ENCODE measurements at regions of chr5 and their contacts with region 1.

Region 1: GRCh38 chr5:81751009-81751835 is at the start of gene SSBP2:
- DNase-seq: peak; percentile 99 to 100 (median 100)
- ATAC-seq: peak; percentile 88 to 94 (median 88)
- H3K4me3 ChIP-seq: peak within 1 kb of the TSS; percentile 54 to 85 (median 69)
- H3K27ac ChIP-seq: peak within 1 kb of the TSS; percentile 93 to 100 (median 98)
- H3K4me1 ChIP-seq: peaks cover 5 to 20% (median 14%) of the 10 kb centered on the region in 3 donors
- H3K27me3 ChIP-seq: no peaks in the 10 kb centered on the region
- CTCF ChIP-seq: no peak
- total RNA-seq, gene SSBP2: 10.1 to 16.9 (median 15.8) TPM

Region 2: GRCh38 chr5:81787474-81788242 is 36.4 kb after region 1 on chr5:
- intact Hi-C with region 1: loop called in 1 of 3 experiments (anchors 5 kb)
- DNase-seq: peak in 3 of 6 donors; percentile 74 to 83 (median 81)
- ATAC-seq: peak; percentile 81 to 93 (median 83)
- H3K4me3 ChIP-seq: no peak overlapping the region
- H3K27ac ChIP-seq: peak overlapping the region in 3 of 4 donors; percentile 24 to 46 (median 43)
- H3K4me1 ChIP-seq: peaks cover 0 to 19% (median 18%) of the 10 kb centered on the region in 3 donors
- H3K27me3 ChIP-seq: no peaks in the 10 kb centered on the region
- CTCF ChIP-seq: no peak

Region 3: GRCh38 chr5:81851481-81852178 is 100.4 kb after region 1 on chr5:
- intact Hi-C with region 1: loop called (anchors 2 to 5 kb)
- DNase-seq: peak; percentile 94 to 98 (median 96)
- ATAC-seq: peak; percentile 93 to 98 (median 96)
- H3K4me3 ChIP-seq: peak overlapping the region in 3 of 4 donors; percentile 23 to 46 (median 43)
- H3K27ac ChIP-seq: peak overlapping the region; percentile 85 to 97 (median 93)
- H3K4me1 ChIP-seq: peaks cover 13 to 41% (median 19%) of the 10 kb centered on the region in 3 donors
- H3K27me3 ChIP-seq: no peaks in the 10 kb centered on the region
- CTCF ChIP-seq: no peak

Region 4: GRCh38 chr5:81856948-81857928 is 106.0 kb after region 1 on chr5:
- intact Hi-C with region 1: loop called in 2 of 3 experiments (anchors 5 kb)
- DNase-seq: peak; percentile 51 to 81 (median 70)
- ATAC-seq: peak; percentile 60 to 80 (median 70)
- H3K4me3 ChIP-seq: no peak overlapping the region
- H3K27ac ChIP-seq: peak overlapping the region in 3 of 4 donors; percentile 13 to 55 (median 50)
- H3K4me1 ChIP-seq: peaks cover 4 to 22% (median 4%) of the 10 kb centered on the region in 3 donors
- H3K27me3 ChIP-seq: no peaks in the 10 kb centered on the region
- CTCF ChIP-seq: no peak

Region 5: GRCh38 chr5:81971712-81972495 is 220.7 kb after region 1 on chr5 and contains the start of gene ATG10:
- intact Hi-C with region 1: loop called in 1 of 3 experiments (anchors 5 kb)
- DNase-seq: peak; percentile 88 to 96 (median 92)
- ATAC-seq: peak; percentile 95 to 99 (median 97)
- H3K4me3 ChIP-seq: peak within 1 kb of the TSS; percentile 46 to 77 (median 60)
- H3K27ac ChIP-seq: peak within 1 kb of the TSS; percentile 97 to 99 (median 98)
- H3K4me1 ChIP-seq: peaks cover 0 to 12% (median 7%) of the 10 kb centered on the region in 3 donors
- H3K27me3 ChIP-seq: no peaks in the 10 kb centered on the region
- CTCF ChIP-seq: no peak
- total RNA-seq, gene ATG10: 3.3 to 5.2 (median 3.5) TPM

Measured in pancreas (tissue), 10 donors.